ENCODE measurements at regions of chr1 and their contacts with region 1.

Region 1: GRCh38 chr1:167357305-167357704 is 136.6 kb downstream of the POU2F1 start:
- DNase-seq: peak; percentile 95
- H3K4me3 ChIP-seq: peak overlapping the region; percentile 57
- H3K27ac ChIP-seq: peak overlapping the region; percentile 100
- H3K4me1 ChIP-seq: peaks cover 83% of the 10 kb centered on the region
- CTCF ChIP-seq: no peak

Region 2: DNA sequence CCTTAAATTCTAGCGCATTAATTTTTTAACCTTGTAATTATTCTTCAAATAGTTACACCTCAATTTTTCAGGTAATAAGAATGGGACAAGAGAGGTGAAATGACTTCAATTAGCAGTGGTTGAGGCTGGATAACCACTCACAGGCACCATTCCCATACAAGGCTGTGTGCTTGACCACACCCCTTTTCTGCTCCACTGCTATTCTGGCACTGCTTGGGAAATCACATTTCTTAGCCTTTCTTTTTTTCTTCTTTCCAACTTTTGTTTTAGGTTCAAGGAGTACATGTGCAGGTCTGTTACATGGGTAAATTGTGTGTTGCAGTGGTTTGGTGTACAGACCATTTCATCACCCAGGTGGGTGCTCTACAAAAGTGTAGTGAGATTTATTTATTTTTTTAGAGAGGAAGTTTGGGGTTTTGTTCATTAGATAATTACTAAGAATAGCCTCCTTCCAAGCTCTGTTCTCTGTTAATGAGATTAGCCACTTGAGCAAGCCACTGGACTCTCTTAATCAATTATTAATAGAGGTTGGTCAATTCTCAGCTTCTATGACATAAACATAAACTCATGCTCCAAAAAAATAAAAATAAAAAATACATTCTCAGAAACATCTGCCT is 396.3 kb before region 1 on chr1:
- CTCF ChIA-PET with region 1: no interaction called
- POLR2A ChIA-PET with region 1: no interaction called
- intact Hi-C with region 1: no loop called
- DNase-seq: no peak
- H3K4me3 ChIP-seq: no peak overlapping the region
- H3K27ac ChIP-seq: no peak overlapping the region
- H3K4me1 ChIP-seq: no peaks in the 10 kb centered on the region
- CTCF ChIP-seq: no peak

Region 3: DNA sequence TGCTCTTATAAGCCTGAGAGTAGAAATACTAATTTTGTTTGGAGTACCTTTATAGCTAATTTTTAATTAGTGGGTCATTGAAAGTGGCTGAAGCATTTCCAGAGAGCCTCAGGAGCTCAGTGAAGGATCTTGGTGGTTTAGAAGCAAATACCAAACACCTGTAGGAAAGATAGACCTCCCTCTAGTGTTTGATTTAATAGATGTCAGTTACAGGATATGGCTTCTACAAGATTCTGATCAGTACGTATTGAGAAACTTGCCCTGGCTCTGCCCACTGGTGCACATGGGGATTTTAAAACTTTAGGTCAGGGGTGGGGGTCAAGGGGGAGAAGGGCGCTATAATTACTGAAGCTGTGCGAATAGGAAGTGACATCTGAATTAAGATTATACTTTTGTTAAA is 14.5 kb before region 1 on chr1:
- CTCF ChIA-PET with region 1: no interaction called
- POLR2A ChIA-PET with region 1: interaction called, 14 read pairs
- intact Hi-C with region 1: no loop called
- DNase-seq: peak; percentile 59
- H3K4me3 ChIP-seq: no peak overlapping the region
- H3K27ac ChIP-seq: no peak overlapping the region
- H3K4me1 ChIP-seq: peaks cover 18% of the 10 kb centered on the region
- CTCF ChIP-seq: peak; percentile 80

Region 4: GRCh38 chr1:168452329-168452728 is 1095.0 kb after region 1 on chr1:
- CTCF ChIA-PET with region 1: no interaction called
- POLR2A ChIA-PET with region 1: no interaction called
- intact Hi-C with region 1: no loop called
- DNase-seq: no peak
- H3K4me3 ChIP-seq: no peak overlapping the region
- H3K27ac ChIP-seq: no peak overlapping the region
- H3K4me1 ChIP-seq: no peaks in the 10 kb centered on the region
- CTCF ChIP-seq: peak; percentile 59